ENCODE measurements at regions of chr6 and their contacts with region 1.

Region 1: DNA sequence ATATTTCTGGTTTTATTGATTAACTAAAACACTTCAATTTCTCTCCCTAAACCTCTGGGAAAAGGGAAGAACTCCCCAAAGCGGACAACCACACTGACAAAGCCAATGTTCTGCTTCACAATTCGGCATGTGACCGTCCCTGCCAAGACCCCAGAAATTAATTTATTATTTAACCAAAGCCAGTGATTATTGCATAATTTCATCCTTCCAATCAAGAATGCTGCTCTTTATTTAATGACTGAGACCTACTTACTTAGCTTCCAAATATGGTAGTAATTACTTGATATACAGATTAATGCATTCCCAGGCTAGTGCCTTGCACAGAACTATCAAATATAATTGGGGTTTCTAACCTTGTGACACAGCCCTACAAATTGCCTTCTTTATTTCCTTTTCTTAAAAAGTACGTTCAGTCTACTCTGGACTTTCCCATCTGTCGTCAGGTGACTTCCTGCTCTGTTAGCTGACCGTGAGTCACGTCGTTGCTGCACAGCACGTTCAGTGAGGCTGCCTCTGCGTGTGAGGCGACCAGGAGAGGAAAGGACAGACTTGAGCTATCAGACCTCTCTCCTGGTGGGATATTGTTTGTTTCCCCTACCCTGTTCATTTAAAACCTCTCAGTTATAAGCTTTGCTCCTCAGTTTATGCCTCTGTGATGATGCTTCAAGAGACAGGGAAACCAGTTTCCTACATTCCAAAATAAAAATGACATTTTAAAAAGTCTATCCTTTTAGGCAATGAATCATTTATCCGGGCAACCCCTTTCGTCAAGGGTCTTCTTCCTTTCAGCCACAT is 55.7 kb upstream of the TNFAIP3 start:
- DNase-seq: peak; percentile 76
- ATAC-seq: peak; percentile 97 to 98
- H3K4me3 ChIP-seq: peak overlapping the region; percentile 12; the same call in 1 of the 3 replicates
- H3K27ac ChIP-seq: peak overlapping the region; percentile 78 to 84
- H3K4me1 ChIP-seq: peaks cover 26% of the 10 kb centered on the region; the same call in 2 of the 3 replicates
- CTCF ChIP-seq: no peak
- EP300 ChIP-seq: no peak
- POLR2A ChIP-seq: no peak
- RAD21 ChIP-seq: no peak

Region 2: GRCh38 chr6:137799950-137800568 is 11.3 kb before region 1 on chr6:
- CTCF ChIA-PET with region 1: interaction called, 14 read pairs
- POLR2A ChIA-PET with region 1: no interaction called
- DNase-seq: peak in 1 of 2 experiments; percentile 54
- ATAC-seq: peak in 1 of 2 experiments; percentile 74; a peak in 3 of 6 replicates
- H3K4me3 ChIP-seq: no peak overlapping the region
- H3K27ac ChIP-seq: no peak overlapping the region
- H3K4me1 ChIP-seq: no peaks in the 10 kb centered on the region
- CTCF ChIP-seq: peak; percentile 39
- EP300 ChIP-seq: no peak
- POLR2A ChIP-seq: no peak
- RAD21 ChIP-seq: peak; percentile 33 to 50; a peak in 3 of 5 replicates

Measured in A549 (cell line).